Mammary epithelial cell (primary cell): ENCODE measurements at regions of chr16 and their contacts with region 1.

Region 1: DNA sequence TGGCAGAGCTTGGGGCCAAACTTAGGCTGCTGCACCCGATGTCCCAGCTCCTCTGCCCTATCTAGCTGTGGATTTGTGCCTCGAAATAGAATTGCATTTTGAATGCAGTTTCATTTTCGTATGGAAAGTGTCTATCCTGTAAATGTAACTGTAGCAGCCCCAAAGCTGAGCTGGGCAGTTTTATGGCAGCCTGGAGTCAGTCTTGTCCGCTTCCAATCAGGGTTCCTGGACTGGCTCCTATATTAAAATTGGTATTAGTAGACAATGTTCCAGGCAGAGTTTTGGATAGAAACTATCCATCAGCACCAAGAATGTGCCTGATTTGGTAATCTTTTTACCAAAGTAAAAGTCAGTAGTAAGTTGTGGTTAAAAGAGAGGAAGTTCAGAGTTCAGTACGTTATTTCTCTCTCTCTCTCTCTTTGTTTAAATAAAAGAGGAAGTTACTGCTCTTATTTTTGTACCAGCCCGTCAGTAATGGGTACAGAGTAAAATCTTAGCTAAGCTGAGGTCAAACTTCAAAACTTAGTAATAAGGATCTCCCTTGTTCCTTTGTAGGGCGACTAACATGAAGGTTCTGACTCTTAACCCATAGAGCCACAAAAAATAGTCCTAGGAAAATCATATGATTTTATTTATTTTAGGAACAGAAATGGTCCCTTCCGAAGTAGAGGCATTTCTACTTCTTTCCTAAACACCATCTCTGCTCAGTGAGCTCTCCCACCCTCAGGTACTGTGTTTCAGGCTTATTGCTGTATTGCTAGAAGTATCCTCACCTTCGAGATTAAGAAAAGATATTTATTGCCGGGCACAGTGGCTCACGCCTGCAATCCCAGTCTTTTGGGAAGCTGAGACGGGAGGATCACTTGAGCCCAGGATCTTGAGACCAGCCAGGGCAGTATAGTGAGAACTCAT is 28.0 kb downstream of the PRKCB start:
- DNase-seq: no peak
- H3K4me3 ChIP-seq: no peak overlapping the region
- H3K27ac ChIP-seq: no peak overlapping the region
- H3K4me1 ChIP-seq: no peaks in the 10 kb centered on the region
- H3K27me3 ChIP-seq: peaks cover 2% of the 10 kb centered on the region
- CTCF ChIP-seq: no peak

Region 2: GRCh38 chr16:23754594-23755483 is 108.9 kb before region 1 on chr16 and contains the start of gene CHP2:
- CTCF ChIA-PET with region 1: no interaction called
- dilution Hi-C with region 1: loop called (anchors 5 kb)
- in situ Hi-C with region 1: no loop called
- intact Hi-C with region 1: no loop called
- DNase-seq: peak; percentile 20
- H3K4me3 ChIP-seq: peak within 1 kb of the TSS; percentile 30 to 38 (median 33)
- H3K27ac ChIP-seq: no peak within 1 kb of the TSS
- H3K4me1 ChIP-seq: peaks cover 7% of the 10 kb centered on the region
- H3K27me3 ChIP-seq: peaks cover 13% of the 10 kb centered on the region
- CTCF ChIP-seq: no peak
- total RNA-seq, gene CHP2: not detected